Heart right ventricle (tissue), 16 donors: ENCODE measurements at regions of chr5 and their contacts with region 1.

Region 1: DNA sequence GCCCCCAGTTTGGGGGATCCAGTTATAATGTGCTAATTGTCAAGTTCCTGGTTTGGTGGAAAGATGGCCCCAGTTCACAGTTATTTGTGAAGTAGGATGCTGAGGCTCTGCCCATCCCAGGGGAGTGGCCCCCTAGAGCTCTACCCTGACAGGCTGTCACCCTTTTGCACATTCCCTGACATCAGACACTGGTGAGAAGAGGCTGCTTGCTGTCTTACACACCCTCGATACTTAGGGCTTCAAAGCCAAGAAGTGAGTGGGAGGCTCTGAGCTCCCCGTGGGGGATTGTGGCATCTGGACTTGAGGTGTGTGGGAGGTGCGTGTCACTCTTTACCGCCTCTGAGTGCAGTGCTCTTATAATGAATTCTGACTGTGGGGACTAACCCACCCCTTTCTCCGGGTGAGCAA is 168.5 kb downstream of the DOCK2 start:
- DNase-seq: no peak
- ATAC-seq: peak in 1 of 8 donors; percentile 13
- H3K4me3 ChIP-seq: no peak overlapping the region
- H3K27ac ChIP-seq: peak overlapping the region in 1 of 10 donors; percentile 46
- H3K4me1 ChIP-seq: peaks cover 0 to 30% (median 0%) of the 10 kb centered on the region in 9 donors
- H3K27me3 ChIP-seq: peaks cover 0 to 10% (median 5%) of the 10 kb centered on the region in 7 donors
- CTCF ChIP-seq: no peak

Region 2: DNA sequence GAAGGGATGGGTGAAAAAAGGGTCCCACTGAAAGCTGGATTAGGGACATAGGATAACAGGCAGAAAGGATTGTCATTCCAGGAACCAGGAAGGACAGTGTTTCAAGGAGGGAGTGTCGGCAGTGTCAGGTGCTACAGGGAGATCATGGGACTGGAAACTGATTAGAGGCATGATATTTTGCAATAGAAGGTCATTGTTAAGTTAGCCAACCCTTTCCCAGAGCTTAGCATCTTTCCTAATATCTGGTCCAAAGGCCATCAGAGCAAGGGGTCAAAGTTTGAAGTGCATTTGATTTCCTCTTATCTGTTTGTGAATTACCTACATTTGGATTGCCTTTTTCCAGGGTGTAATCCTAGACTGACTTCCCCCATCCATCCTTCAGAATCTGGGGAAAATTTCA is 77.1 kb before region 1 on chr5:
- intact Hi-C with region 1: no loop called
- DNase-seq: no peak
- ATAC-seq: no peak
- H3K4me3 ChIP-seq: no peak overlapping the region
- H3K27ac ChIP-seq: no peak overlapping the region
- H3K4me1 ChIP-seq: no peaks in the 10 kb centered on the region
- H3K27me3 ChIP-seq: peaks cover 0 to 7% (median 0%) of the 10 kb centered on the region in 7 donors
- CTCF ChIP-seq: no peak

Region 3: DNA sequence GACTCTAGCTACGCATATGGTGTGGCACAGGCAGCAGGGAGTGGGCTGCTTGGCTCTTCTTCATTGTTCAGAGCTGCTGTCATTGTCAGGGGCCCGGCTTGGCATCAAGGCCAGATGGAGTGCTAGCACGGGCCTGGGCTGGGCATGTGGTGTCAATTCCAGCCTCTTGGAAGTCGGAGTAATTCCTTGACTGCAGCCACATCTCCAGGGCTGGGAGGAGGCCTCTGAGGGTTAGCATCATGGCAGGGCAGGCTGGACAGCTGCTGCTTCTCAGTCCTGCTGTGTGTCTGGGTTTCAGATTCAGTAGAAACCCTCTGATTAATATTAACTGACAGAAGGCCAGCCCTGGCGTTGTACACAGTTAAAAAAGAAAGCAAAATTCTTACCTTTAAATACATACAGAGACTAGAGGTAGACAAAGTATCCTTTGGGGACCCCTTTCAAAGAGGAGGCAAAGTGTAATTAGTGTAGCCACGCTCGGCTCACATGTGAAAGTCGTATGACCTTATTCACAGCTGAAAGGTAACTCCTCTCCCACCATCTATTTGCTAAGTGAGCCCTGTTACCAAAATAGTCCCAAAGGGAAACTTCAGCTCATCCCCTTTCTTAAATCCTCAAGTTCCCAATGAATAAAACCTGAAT is 42.0 kb before region 1 on chr5:
- intact Hi-C with region 1: no loop called
- DNase-seq: no peak
- ATAC-seq: peak in 1 of 8 donors; percentile 44
- H3K4me3 ChIP-seq: no peak overlapping the region
- H3K27ac ChIP-seq: no peak overlapping the region
- H3K4me1 ChIP-seq: peaks cover 0 to 11% (median 5%) of the 10 kb centered on the region in 9 donors
- H3K27me3 ChIP-seq: no peaks in the 10 kb centered on the region
- CTCF ChIP-seq: no peak

Region 4: DNA sequence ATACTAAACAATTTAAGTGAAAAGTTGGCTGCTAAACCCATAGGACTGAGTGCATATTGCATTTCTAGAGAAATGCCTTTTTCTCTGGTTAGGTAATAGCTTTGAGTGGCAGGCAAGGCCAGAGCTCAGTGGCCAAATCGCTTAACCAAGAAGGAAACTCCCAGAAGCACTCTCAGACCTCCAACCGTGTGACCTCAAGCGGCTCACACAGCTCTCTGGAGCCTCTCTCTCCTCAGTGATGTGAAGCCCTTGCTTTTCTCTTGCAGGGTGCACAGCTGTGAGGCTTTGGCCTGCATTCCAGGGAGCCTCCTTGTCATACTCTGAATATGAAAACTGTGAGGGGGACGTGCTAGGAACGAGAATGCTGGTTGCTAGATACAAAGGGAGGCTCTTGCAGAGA is 68.1 kb after region 1 on chr5:
- intact Hi-C with region 1: loop called in 1 of 10 experiments (anchors 10 kb)
- DNase-seq: peak in 1 of 2 donors; percentile 33
- ATAC-seq: peak; percentile 60 to 85 (median 79)
- H3K4me3 ChIP-seq: no peak overlapping the region
- H3K27ac ChIP-seq: peak overlapping the region in 1 of 10 donors; percentile 39
- H3K4me1 ChIP-seq: peaks cover 0 to 49% (median 0%) of the 10 kb centered on the region in 9 donors
- H3K27me3 ChIP-seq: peaks cover 0 to 4% (median 0%) of the 10 kb centered on the region in 7 donors
- CTCF ChIP-seq: no peak